B cell (primary cell): ENCODE measurements at regions of chr5 and their contacts with region 1.

Region 1: DNA sequence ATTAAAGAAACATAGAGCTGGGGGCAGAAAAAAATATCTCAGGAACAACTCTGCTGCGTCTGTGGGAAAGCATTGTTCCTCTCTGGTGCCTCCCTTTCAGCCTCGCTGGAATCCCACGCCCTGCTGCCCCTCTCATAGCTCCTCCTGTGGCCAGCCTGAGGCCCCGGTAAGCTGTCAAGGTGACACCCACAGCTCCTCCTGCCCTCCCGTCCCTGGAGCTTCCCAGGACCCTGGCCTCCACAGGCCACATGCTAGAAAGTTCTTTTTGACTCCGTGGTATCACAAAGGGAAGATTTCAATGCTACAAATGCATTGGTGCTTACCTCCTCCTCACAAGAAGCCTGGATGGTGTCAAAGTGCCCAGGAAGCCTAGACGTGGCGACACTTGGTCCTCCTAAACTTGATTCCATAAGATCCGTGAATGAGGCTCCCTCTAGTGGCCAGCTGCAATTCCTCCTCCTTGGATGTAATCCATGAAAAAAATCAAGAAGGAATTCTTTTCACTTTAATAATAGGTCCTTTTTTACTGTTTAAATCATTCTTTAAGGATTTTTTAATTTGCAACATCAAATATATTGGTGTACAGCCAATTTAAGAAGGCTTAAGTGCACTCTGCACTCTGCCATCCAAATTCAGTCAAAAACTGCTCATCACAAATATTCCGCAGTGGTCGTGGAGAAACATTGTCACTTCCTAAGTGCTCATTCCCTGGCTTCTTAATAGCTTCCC is 104.9 kb downstream of the CFAP90 start:
- DNase-seq: peak; percentile 29
- ATAC-seq: no peak
- H3K4me3 ChIP-seq: no peak overlapping the region
- H3K4me3 Mint-ChIP-seq: no peak overlapping the region
- H3K27ac ChIP-seq: no peak overlapping the region
- H3K27ac Mint-ChIP-seq: no peak overlapping the region
- H3K4me1 ChIP-seq: no peaks in the 10 kb centered on the region
- H3K4me1 Mint-ChIP-seq: no peaks in the 10 kb centered on the region
- H3K27me3 ChIP-seq: no peaks in the 10 kb centered on the region
- H3K27me3 Mint-ChIP-seq: peaks cover 8% of the 10 kb centered on the region
- CTCF ChIP-seq: peak; percentile 73

Region 2: DNA sequence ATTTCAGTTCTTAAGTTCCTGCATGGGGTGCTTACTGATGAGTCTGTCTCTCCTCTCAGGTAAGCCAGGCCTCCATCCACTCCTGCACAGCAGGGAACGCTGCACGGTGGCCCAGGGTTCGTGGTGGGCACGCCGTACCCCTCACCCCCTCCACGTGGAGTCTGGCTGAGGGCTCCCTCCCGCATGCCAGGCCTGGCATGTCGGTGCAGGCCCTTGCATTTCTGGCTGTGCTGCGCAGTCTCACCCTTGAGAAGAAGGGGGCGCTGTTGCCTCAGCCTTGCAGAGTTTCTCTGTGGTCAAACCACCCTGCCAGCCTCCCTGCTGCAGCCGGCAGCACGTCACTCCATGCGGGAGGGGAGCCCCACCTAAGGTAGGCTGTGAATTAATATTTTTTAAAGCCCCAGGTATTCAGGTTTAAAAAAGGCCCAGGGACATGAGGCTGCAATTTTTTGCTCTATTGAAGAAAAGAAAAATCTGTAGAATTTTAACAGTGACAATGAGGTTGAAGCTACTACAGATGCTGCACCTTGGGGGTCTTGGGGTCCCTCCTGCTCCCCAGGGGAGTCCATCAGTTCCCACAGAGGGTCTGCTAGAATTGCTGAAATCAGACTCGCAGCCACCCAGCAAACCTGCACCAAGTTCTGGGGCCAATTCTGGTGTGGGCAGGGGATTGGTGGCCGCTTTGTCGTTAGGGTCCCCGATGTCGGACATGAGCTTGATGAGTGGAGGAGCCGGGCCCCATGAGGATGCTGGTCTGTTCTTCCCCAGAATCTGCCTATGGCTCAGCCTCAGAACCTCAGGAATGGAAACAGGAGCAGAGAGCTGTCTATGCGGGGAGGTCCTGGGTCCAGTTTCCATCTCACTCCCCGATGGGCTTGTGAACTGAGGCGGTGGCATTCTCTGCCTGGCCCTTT is 980.2 kb before region 1 on chr5:
- CTCF ChIA-PET with region 1: no interaction called
- POLR2A ChIA-PET with region 1: no interaction called
- intact Hi-C with region 1: loop called (anchors 5 kb)
- DNase-seq: peak; percentile 30
- ATAC-seq: peak; percentile 21
- H3K4me3 ChIP-seq: no peak overlapping the region
- H3K4me3 Mint-ChIP-seq: no peak overlapping the region
- H3K27ac ChIP-seq: no peak overlapping the region
- H3K27ac Mint-ChIP-seq: no peak overlapping the region
- H3K4me1 ChIP-seq: no peaks in the 10 kb centered on the region
- H3K4me1 Mint-ChIP-seq: peaks cover 1% of the 10 kb centered on the region
- H3K27me3 ChIP-seq: no peaks in the 10 kb centered on the region
- H3K27me3 Mint-ChIP-seq: peaks cover 4% of the 10 kb centered on the region
- CTCF ChIP-seq: peak; percentile 48

Region 3: GRCh38 chr5:7930011-7930410 is 184.0 kb after region 1 on chr5:
- CTCF ChIA-PET with region 1: no interaction called
- POLR2A ChIA-PET with region 1: no interaction called
- intact Hi-C with region 1: no loop called
- DNase-seq: no peak
- ATAC-seq: no peak
- H3K4me3 ChIP-seq: no peak overlapping the region
- H3K4me3 Mint-ChIP-seq: no peak overlapping the region
- H3K27ac ChIP-seq: no peak overlapping the region
- H3K27ac Mint-ChIP-seq: no peak overlapping the region
- H3K4me1 ChIP-seq: no peaks in the 10 kb centered on the region
- H3K4me1 Mint-ChIP-seq: peaks cover 1% of the 10 kb centered on the region
- H3K27me3 ChIP-seq: no peaks in the 10 kb centered on the region
- H3K27me3 Mint-ChIP-seq: peaks cover 4% of the 10 kb centered on the region
- CTCF ChIP-seq: no peak